SK-N-SH (cell line): ENCODE measurements at regions of chr3 and their contacts with region 1.

Region 1: DNA sequence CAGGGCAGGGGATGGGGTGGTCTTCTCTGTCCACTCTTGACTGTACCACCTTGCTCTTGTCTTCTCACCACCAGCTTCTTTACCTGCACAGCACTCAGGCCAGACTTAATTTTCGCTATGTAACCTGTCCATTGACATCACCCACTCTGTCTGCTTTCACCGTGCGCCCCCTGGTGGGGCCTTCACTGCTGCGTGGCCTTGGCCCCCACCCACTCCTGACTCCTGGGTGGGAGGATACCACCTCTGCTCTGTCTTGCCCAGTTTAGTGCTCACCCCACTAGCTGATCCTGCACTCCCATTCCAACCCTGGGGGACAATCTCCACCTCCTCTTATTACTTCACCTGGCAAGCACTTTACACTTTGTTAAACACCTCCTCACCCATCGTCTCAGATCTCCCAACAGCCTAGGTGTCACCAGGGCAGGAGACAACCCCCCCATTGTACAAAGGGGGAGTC is 17.7 kb downstream of the PTH1R start:
- DNase-seq: peak; percentile 85
- H3K4me3 ChIP-seq: no peak overlapping the region; a peak in 1 of 4 replicates
- H3K27ac ChIP-seq: no peak overlapping the region
- H3K4me1 ChIP-seq: peaks cover 0 to 32% of the 10 kb centered on the region in 2 experiments; a peak in 1 of 4 replicates
- H3K27me3 ChIP-seq: no peaks in the 10 kb centered on the region
- CTCF ChIP-seq: peak; percentile 90
- EP300 ChIP-seq: no peak
- RAD21 ChIP-seq: peak; percentile 85

Region 2: GRCh38 chr3:46705022-46705530 is 190.2 kb before region 1 on chr3:
- CTCF ChIA-PET with region 1: interaction called, 40 read pairs
- POLR2A ChIA-PET with region 1: no interaction called
- DNase-seq: peak; percentile 81
- H3K4me3 ChIP-seq: no peak overlapping the region; a peak in 1 of 4 replicates
- H3K27ac ChIP-seq: no peak overlapping the region
- H3K4me1 ChIP-seq: peaks cover 0 to 32% of the 10 kb centered on the region in 2 experiments; a peak in 1 of 4 replicates
- H3K27me3 ChIP-seq: peaks cover 14% of the 10 kb centered on the region
- CTCF ChIP-seq: peak; percentile 94
- EP300 ChIP-seq: no peak
- RAD21 ChIP-seq: peak; percentile 97

Region 3: GRCh38 chr3:46845791-46846623 is 49.2 kb before region 1 on chr3:
- CTCF ChIA-PET with region 1: interaction called, 72 read pairs
- POLR2A ChIA-PET with region 1: interaction called, 7 read pairs
- DNase-seq: peak; percentile 98
- H3K4me3 ChIP-seq: peak overlapping the region; percentile 46 to 49; a peak in 3 of 4 replicates
- H3K27ac ChIP-seq: peak overlapping the region; percentile 38 to 98
- H3K4me1 ChIP-seq: peaks cover 0 to 27% of the 10 kb centered on the region in 2 experiments; a peak in 2 of 4 replicates
- H3K27me3 ChIP-seq: no peaks in the 10 kb centered on the region
- CTCF ChIP-seq: peak; percentile 53
- EP300 ChIP-seq: peak in 1 of 2 experiments; percentile 21; a peak in 1 of 4 replicates
- RAD21 ChIP-seq: peak; percentile 64

Region 4: DNA sequence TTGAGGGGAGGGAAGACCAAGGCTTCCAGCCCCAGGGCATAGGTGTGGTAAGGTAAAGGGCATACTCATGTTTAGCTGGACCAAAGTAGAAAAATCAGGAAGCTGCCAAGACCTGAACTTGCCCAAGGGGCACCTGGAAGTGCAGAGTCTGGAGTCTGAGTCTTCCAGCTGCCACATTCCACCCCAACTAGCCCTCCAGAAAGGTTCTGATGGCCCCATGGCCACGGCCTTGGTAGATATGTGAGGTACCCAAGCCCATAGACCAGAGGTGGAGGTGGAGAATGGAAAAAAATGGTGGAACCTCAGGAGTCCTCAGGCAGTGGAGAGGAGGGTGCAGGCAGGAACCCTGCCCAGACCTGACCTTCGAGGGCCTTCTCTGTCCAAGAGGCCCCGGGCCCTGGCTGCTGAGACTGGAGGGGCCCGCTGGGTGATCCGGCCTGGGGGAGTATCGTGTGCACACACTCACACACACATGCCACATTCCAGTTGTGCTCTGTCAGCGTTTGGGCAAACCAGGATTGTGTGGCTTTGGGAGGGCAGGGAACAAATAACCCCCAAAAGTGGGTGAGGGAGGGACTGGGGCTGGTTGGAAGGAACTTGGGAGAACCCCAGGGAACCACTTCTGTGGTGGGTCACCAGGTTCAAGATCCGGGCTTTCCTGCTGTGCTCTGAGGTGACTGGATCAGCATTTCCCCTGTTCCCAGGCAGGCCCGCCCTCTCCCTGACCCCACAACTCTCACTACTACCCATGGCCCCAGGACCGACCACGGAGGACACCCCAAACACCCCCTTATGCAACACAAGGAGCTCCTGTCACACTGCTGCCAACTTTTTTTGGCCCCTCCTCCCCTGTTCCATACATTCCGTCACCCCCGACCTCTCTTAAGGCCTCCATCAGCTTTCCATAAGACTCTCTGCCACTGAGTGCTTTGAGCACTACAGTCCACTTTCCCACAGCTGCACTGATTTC is 43.6 kb before region 1 on chr3:
- CTCF ChIA-PET with region 1: interaction called, 72 read pairs
- POLR2A ChIA-PET with region 1: no interaction called
- DNase-seq: no peak
- H3K4me3 ChIP-seq: no peak overlapping the region
- H3K27ac ChIP-seq: no peak overlapping the region
- H3K4me1 ChIP-seq: peaks cover 0 to 13% of the 10 kb centered on the region in 2 experiments; a peak in 2 of 4 replicates
- H3K27me3 ChIP-seq: no peaks in the 10 kb centered on the region; the same call in 1 of the 2 replicates
- CTCF ChIP-seq: no peak
- EP300 ChIP-seq: no peak
- RAD21 ChIP-seq: no peak

Region 5: DNA sequence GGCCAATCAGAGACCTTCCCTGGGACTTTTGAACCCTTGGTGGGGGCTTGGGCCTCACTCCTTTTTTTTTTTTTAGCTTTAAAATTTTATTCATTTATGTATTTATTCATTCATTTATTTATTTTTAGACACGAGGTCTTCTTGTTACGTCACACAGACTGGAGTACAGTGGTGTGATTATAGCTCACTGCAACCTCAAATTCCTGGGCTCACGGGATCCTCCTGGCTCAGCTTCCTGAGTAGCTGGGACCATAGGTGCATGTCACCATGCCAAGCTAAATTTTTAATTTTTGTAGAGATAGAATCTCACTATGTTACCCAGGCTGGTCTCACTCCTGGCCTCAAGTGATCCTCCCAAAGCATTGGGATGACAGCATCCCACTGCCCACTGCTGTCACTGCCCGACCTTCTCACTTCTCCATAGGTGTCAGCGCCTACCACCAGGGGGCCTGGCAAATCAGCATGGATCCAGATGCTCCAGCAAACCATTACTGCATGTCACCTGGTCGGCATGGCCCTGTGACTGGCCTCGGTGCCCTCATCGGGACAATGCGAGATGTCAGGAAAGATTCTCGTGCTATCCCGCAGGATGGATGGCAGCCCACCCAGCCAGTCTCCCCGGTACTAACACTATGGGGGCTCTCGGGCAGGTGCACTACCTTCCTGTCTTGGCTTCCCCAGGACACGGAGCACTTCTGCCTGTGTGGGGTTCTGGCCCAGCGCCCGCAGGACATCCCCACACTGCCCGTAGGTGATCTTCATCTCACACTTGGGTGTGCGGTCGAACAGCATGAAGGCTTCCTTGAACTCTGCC is 35.0 kb before region 1 on chr3:
- CTCF ChIA-PET with region 1: interaction called, 480 read pairs
- POLR2A ChIA-PET with region 1: no interaction called
- DNase-seq: no peak
- H3K4me3 ChIP-seq: no peak overlapping the region
- H3K27ac ChIP-seq: no peak overlapping the region
- H3K4me1 ChIP-seq: peaks cover 0 to 15% of the 10 kb centered on the region in 2 experiments; a peak in 1 of 4 replicates
- H3K27me3 ChIP-seq: peaks cover 7% of the 10 kb centered on the region; the same call in 1 of the 2 replicates
- CTCF ChIP-seq: peak; percentile 52; the same call in 1 of the 2 replicates
- EP300 ChIP-seq: no peak
- RAD21 ChIP-seq: peak; percentile 40

Region 6: DNA sequence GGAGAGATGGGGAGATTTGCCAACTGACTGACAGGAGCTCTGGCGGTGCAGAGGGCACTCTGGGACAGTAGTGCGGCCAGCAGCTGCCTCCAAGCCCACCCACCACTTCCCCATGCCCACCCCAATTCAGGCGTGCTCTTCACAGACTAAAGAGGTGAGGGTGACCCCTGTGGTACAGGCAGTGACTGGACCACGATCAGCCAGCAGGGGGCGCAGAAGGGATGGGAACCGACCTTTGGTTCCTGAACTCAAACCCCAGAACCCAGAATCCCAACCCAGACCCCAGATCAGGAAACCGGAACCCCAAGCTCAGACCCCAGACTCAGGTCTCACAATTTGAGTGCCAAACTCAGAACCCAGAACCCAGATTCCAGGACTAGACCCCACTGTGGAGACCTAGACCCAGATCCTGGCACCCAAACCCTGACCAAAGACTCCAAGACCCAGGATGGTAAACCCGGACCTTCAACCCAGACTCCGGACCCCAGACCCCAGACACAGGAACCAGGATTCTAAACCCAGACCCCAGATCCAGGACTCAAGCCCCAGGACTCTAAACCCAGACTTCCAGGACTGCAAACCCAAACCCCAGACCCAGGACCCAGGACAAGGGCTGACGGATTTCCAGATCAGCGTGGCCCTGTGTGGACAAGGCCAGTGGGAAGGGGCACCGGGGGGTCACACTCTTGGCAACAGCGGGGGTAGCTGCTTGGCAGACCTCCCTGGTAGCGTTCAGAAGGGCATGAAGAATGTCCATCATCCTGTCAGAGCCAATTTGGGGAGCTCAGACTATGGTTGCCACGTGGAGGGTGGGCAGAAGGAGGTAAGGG is 28.3 kb before region 1 on chr3:
- CTCF ChIA-PET with region 1: interaction called, 480 read pairs
- POLR2A ChIA-PET with region 1: interaction called, 3 read pairs
- DNase-seq: peak; percentile 86
- H3K4me3 ChIP-seq: peak overlapping the region in 1 of 2 experiments; percentile 48; a peak in 1 of 4 replicates
- H3K27ac ChIP-seq: no peak overlapping the region; a peak in 1 of 4 replicates
- H3K4me1 ChIP-seq: peaks cover 0 to 40% of the 10 kb centered on the region in 2 experiments; a peak in 1 of 4 replicates
- H3K27me3 ChIP-seq: no peaks in the 10 kb centered on the region
- CTCF ChIP-seq: peak; percentile 91
- EP300 ChIP-seq: no peak
- RAD21 ChIP-seq: peak; percentile 78

Region 7: DNA sequence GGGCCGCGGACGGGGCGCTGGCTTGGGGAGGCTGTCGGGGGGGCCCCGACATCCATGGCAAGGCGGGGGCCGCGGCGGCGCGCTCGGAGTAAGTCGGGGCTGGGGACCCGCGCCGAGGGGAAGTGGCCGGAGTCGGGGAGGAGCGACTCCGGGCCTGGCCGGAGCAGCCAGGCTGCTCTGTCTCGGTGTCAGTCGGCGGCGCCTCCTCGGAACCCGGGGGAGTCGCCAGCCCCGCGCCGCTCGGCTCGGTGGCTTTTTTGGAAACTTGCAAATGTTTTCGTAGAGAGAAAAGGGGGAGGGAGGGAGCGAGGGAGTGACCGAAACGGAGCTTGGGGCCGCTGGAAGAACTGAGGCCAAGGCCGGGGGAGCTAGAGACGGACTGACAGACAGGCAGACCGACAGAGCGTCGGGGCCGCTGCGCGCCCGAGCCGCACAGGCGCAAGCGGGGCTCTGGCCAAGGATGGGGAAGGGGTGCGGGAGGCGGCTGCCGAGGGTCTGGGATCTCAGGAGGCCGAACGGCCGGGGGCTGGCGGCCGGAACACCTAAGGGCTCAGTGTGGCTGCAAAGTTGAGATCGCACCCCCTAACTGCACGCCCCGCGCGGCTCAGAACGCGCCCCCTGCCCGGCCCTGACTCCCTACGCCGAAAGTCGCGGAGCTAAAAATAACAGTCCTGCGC is 12.7 kb before region 1 on chr3:
- CTCF ChIA-PET with region 1: interaction called, 480 read pairs
- POLR2A ChIA-PET with region 1: no interaction called
- DNase-seq: peak; percentile 82
- H3K4me3 ChIP-seq: peak overlapping the region; percentile 44 to 64
- H3K27ac ChIP-seq: no peak overlapping the region
- H3K4me1 ChIP-seq: peaks cover 0 to 20% of the 10 kb centered on the region in 2 experiments; a peak in 1 of 4 replicates
- H3K27me3 ChIP-seq: peaks cover 22% of the 10 kb centered on the region
- CTCF ChIP-seq: no peak
- EP300 ChIP-seq: no peak
- RAD21 ChIP-seq: no peak